AG04449 (cell line): ENCODE measurements at regions of chr18 and their contacts with region 1.

Region 1: GRCh38 chr18:35397976-35398375 is 20.8 kb upstream of the ZNF396 start:
- DNase-seq: no peak
- H3K4me3 ChIP-seq: no peak overlapping the region
- CTCF ChIP-seq: no peak

Region 2: DNA sequence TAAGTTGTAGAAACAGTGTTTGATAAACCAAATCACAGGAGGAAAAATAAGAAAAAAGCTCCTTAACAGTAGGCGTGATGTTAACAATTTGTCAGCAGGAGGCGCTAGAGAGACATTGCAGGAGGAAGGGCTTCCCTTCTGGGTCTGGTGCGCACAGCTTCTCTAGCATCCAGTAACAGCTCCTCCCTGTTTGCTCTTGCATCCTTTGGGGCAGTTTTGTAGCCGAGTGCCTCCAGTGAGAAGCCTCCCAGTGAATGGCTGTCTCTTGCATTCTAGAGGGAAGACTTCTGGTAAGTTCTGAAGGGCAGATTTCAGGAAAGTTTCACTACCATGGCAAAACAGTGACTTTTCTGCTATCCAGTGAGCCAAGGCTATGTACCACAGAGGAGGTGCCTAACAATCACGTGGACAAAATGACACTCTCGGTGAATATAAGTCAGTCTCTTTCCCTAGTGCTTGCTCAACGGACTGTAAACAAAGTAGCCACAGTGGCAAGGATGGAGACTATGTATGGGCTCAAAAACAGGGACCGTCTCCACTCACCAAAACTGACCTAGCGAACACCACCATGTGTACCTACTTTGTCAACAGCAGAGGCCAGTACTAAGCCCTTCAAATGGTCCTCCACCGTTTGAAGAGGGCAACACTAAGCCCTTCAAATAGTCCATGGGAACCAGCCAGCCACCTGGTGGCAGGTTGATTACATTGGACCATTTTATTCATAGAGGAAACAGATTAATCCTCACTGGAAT is 11.2 kb before region 1 on chr18:
- CTCF ChIA-PET with region 1: interaction called, 10 read pairs
- POLR2A ChIA-PET with region 1: no interaction called
- DNase-seq: no peak
- H3K4me3 ChIP-seq: no peak overlapping the region
- CTCF ChIP-seq: peak; percentile 75

Region 3: GRCh38 chr18:35407871-35408481 is 10.0 kb after region 1 on chr18:
- CTCF ChIA-PET with region 1: interaction called, 21 read pairs
- POLR2A ChIA-PET with region 1: no interaction called
- DNase-seq: no peak
- H3K4me3 ChIP-seq: no peak overlapping the region
- CTCF ChIP-seq: peak; percentile 64

Region 4: GRCh38 chr18:35514752-35515459 is 116.9 kb after region 1 on chr18:
- CTCF ChIA-PET with region 1: no interaction called
- POLR2A ChIA-PET with region 1: no interaction called
- DNase-seq: no peak
- H3K4me3 ChIP-seq: no peak overlapping the region
- CTCF ChIP-seq: no peak

Region 5: GRCh38 chr18:35526476-35527120 is 128.6 kb after region 1 on chr18:
- CTCF ChIA-PET with region 1: no interaction called
- POLR2A ChIA-PET with region 1: no interaction called
- DNase-seq: no peak
- H3K4me3 ChIP-seq: no peak overlapping the region
- CTCF ChIP-seq: no peak